PC-9 (cell line): ENCODE measurements at regions of chr1 and their contacts with region 1.

Region 1: DNA sequence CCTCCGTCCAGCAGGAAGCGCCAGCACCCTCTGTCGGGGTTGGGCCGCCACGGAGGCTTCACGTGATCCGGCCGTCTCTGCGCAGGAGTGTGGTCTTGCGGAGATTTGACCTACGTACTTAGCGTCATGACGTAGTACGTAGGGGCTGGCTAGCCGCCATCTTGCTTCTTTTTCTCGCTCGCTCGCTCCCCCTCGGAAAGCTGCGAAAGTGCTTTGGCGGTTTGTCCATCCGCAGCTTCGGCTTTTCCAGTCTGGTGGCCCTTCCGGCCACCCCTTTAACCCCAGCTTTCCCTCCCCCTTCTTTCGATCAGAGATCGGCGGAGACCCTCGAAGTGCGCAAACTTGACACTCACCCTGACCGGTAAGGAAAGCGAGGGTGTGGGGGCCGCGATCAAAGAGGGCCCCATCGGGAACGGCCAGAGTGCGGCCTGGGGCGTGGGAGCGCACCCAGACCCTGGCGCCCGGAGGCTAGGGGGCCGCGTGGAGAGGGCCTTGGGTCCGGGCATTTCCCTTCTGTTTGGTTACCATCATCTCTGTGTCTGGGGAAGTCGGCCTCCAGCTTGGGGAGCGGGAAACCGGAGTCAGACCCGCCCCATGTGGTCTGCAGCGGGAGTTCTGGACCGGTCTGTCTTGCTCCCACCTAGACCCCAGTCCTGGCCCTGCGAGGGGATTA is at the start of gene PRRC2C:
- DNase-seq: peak; percentile 91 to 94
- H3K4me3 ChIP-seq: peak within 1 kb of the TSS; percentile 96
- H3K27ac ChIP-seq: peak within 1 kb of the TSS; percentile 95
- H3K4me1 ChIP-seq: peaks cover 18% of the 10 kb centered on the region
- H3K27me3 ChIP-seq: no peaks in the 10 kb centered on the region
- CTCF ChIP-seq: peak; percentile 74; the same call in 1 of the 2 replicates
- total RNA-seq, gene PRRC2C: 99.2 and 136 TPM in 2 replicates

Region 2: GRCh38 chr1:169928438-169929209 is 1556.9 kb before region 1 on chr1:
- CTCF ChIA-PET with region 1: no interaction called
- POLR2A ChIA-PET with region 1: interaction called, 11 read pairs
- intact Hi-C with region 1: no loop called
- DNase-seq: peak in 1 of 2 experiments; percentile 54
- H3K4me3 ChIP-seq: no peak overlapping the region
- H3K27ac ChIP-seq: no peak overlapping the region
- H3K4me1 ChIP-seq: peaks cover 12% of the 10 kb centered on the region
- H3K27me3 ChIP-seq: no peaks in the 10 kb centered on the region
- CTCF ChIP-seq: peak; percentile 83

Region 3: GRCh38 chr1:171313835-171314320 is 171.6 kb before region 1 on chr1 and contains the start of gene FMO4:
- CTCF ChIA-PET with region 1: no interaction called
- POLR2A ChIA-PET with region 1: no interaction called
- intact Hi-C with region 1: loop called (anchors 10 kb)
- DNase-seq: peak; percentile 62 to 85
- H3K4me3 ChIP-seq: peak within 1 kb of the TSS; percentile 7; the same call in 1 of the 2 replicates
- H3K27ac ChIP-seq: no peak within 1 kb of the TSS
- H3K4me1 ChIP-seq: no peaks in the 10 kb centered on the region
- H3K27me3 ChIP-seq: peaks cover 8% of the 10 kb centered on the region; the same call in 1 of the 2 replicates
- CTCF ChIP-seq: peak; percentile 73
- total RNA-seq, gene FMO4: 0.28 and 0.61 TPM in 2 replicates

Region 4: DNA sequence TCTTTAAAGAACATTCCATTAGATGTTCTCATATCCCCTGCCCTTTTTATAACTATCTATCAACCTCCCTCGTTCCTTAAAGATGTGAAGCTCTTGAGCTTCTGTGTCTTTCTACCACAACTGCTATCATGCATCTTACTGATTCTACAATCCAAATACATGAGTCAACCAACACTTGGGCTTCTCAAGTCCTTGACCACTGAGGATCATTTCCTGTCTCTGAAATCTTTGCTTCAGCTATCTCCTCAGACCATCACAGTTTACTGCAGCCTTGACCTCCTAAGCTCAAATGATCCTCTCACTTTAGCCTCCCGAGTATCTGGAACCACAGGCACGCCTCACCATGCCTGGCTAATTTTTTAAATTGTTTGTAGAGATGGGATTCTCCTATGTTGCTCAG is 96.3 kb before region 1 on chr1:
- CTCF ChIA-PET with region 1: no interaction called
- POLR2A ChIA-PET with region 1: no interaction called
- intact Hi-C with region 1: loop called (anchors 10 kb)
- DNase-seq: no peak
- H3K4me3 ChIP-seq: no peak overlapping the region
- H3K27ac ChIP-seq: no peak overlapping the region
- H3K4me1 ChIP-seq: no peaks in the 10 kb centered on the region
- H3K27me3 ChIP-seq: no peaks in the 10 kb centered on the region
- CTCF ChIP-seq: no peak

Region 5: DNA sequence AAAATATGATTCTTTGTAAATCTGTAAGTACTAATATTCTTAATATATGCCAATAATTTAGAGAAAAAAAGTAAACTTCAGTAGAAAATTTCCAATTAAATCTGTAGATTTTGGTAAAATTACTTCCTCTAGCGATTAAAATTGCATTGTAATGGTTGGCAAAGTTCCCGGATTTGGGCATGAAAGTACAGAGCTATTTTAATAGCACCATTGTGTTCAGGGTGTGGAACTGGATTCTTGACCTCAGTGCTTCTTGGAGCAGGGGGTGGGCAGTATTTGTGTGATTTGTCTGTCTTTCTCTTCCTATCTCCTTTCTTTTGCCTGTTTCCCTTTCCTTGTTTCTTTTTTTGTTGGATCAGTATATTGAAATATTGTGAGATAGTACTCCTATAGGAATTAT is 427.9 kb after region 1 on chr1:
- CTCF ChIA-PET with region 1: no interaction called
- POLR2A ChIA-PET with region 1: no interaction called
- intact Hi-C with region 1: no loop called
- DNase-seq: peak in 1 of 2 experiments; percentile 26
- H3K4me3 ChIP-seq: no peak overlapping the region
- H3K27ac ChIP-seq: no peak overlapping the region
- H3K4me1 ChIP-seq: peaks cover 11% of the 10 kb centered on the region
- H3K27me3 ChIP-seq: no peaks in the 10 kb centered on the region; the same call in 1 of the 2 replicates
- CTCF ChIP-seq: no peak